Psoas muscle (tissue), 8 donors: ENCODE measurements at regions of chr11 and their contacts with region 1.

Region 1: GRCh38 chr11:3160252-3161031 is 4.7 kb downstream of the OSBPL5 start:
- DNase-seq: peak; percentile 91 to 93
- ATAC-seq: peak; percentile 75 to 88 (median 78)
- H3K4me3 ChIP-seq: peak overlapping the region; percentile 70
- H3K27ac ChIP-seq: peak overlapping the region; percentile 48
- H3K4me1 ChIP-seq: peaks cover 54% of the 10 kb centered on the region
- H3K27me3 ChIP-seq: no peaks in the 10 kb centered on the region
- CTCF ChIP-seq: no peak

Region 2: DNA sequence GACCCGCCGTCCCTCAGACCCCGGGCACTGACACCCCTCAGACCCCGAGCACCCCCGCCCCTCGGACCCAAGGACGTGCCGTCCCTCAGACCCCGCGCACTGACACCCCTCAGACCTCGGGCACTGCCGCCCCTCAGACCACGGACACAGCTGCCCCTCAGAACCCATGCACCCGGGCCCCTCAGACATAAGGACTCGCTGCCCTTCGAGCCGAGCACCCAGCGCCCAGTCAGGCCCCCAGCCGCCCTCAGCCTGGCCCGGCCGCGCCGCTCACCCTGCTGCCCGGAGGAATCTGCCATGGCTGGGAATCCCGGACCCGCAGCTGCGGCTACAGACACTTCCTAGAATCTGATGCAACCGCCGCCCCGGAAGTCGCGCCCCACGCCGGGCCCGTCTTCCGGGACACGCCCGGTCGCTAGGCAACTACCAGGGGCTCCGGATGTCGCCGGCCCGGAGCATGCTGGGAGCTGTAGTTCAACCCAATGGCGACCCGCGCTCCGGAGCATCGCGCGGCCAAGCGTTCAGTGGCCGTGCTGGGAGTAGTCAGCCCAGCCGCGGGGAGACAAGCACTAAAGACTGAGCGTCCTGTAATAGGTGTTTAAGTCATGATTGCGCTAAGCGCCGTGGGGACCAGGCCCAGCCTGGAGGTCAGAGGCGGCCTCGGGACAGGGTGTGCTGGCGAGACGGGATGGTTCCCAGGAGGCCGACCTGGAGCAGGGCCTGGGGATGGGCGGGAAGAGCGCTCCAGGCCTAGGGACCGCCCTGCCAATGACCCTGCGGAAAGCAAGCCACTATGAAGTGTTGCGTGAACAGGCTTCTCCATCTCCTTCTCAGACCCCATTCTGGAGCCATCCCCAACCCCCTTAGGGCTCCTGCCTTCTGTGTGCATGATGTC is 103.1 kb before region 1 on chr11 and contains the start of gene CARS1:
- intact Hi-C with region 1: loop called in 1 of 2 experiments (anchors 10 kb)
- DNase-seq: peak; percentile 98
- ATAC-seq: peak; percentile 97 to 99 (median 98)
- H3K4me3 ChIP-seq: peak within 1 kb of the TSS; percentile 90
- H3K27ac ChIP-seq: peak within 1 kb of the TSS; percentile 89
- H3K4me1 ChIP-seq: peaks cover 21% of the 10 kb centered on the region
- H3K27me3 ChIP-seq: no peaks in the 10 kb centered on the region
- CTCF ChIP-seq: no peak
- total RNA-seq, gene CARS1: 24.2 to 65.8 (median 40.2) TPM

Region 3: GRCh38 chr11:3099178-3099577 is 61.3 kb before region 1 on chr11:
- intact Hi-C with region 1: no loop called
- DNase-seq: no peak
- ATAC-seq: no peak
- H3K4me3 ChIP-seq: no peak overlapping the region
- H3K27ac ChIP-seq: no peak overlapping the region
- H3K4me1 ChIP-seq: no peaks in the 10 kb centered on the region
- H3K27me3 ChIP-seq: no peaks in the 10 kb centered on the region
- CTCF ChIP-seq: no peak

Region 4: DNA sequence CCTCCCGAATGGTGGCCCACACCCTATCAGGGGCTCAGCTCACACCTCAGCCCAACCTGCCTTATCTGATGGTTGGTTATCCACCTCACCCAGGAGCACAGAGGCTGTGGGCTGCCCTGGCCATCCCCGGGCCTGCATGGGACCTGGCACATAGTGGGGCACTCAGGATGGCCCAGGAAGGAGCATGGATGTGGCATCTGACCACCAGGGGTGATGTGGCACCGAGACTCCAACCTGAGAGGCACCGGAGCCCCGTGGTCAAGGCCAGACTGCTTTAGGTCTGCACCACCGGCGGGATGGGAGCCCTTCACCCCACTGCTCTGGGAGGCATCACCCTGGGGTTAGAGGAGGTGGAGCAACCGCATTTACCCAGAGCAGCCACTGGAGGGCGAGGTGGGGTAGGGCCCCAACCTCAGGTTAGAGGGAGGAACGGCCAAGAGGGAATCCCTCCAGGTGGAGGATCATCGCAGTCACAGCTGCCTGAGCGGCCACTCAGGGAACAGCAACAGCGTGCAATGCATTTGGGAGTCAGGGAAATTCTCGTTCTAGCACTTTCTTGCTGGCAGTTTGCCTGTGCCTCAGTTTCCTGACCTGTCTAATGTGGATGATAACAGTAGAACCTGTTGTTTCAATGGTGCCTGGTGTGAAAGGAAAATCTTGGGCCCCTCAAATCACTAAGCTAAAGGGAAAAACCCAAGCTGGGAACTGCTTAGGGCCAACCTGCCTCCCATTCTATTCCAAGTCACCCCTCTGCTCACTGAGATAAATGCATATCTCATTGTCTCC is 50.3 kb before region 1 on chr11:
- intact Hi-C with region 1: loop called in 1 of 2 experiments (anchors 10 kb)
- DNase-seq: peak; percentile 46 to 82
- ATAC-seq: peak; percentile 86 to 97 (median 96)
- H3K4me3 ChIP-seq: no peak overlapping the region
- H3K27ac ChIP-seq: no peak overlapping the region
- H3K4me1 ChIP-seq: no peaks in the 10 kb centered on the region
- H3K27me3 ChIP-seq: no peaks in the 10 kb centered on the region
- CTCF ChIP-seq: peak; percentile 78

Region 5: GRCh38 chr11:3146612-3147256 is 13.7 kb before region 1 on chr11:
- intact Hi-C with region 1: loop called in 1 of 2 experiments (anchors 1 kb)
- DNase-seq: no peak
- ATAC-seq: peak; percentile 51 to 82 (median 68)
- H3K4me3 ChIP-seq: no peak overlapping the region
- H3K27ac ChIP-seq: peak overlapping the region; percentile 67
- H3K4me1 ChIP-seq: peaks cover 19% of the 10 kb centered on the region
- H3K27me3 ChIP-seq: no peaks in the 10 kb centered on the region
- CTCF ChIP-seq: no peak